HEK293T (cell line): ENCODE measurements at regions of chr6 and their contacts with region 1.

Region 1: GRCh38 chr6:125790358-125791150 is at the start of gene NCOA7:
- DNase-seq: peak; percentile 66

Region 2: DNA sequence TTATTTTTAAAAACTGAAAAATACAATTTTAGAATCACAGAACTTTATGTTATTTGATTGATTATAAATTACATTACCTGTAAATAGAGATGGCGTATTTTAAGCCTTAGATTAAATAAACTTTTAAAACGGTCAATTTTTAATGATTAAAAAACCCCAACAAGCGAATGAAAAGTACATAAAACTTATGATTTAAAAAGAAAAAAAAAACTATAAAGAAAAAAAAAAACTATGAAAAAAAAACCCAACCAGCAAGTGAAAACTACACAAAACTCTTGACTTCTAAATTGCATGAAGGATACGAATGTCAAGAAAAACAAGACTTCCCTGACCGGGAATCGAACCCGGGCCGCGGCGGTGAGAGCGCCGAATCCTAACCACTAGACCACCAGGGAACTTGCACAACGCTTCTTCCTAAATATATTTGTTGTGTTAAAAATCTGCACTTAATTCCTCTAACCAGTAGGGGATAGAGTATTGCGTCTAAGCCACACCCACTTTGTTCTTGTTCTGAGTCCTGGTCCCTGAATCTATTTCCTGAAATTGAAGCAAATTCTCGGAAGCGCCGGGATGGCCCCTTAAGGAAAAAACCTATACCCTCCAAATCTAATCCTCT is 10.5 kb before region 1 on chr6:
- CTCF ChIA-PET with region 1: interaction called, 22 read pairs
- POLR2A ChIA-PET with region 1: interaction called, 87 read pairs
- DNase-seq: peak; percentile 92

Region 3: GRCh38 chr6:125810445-125810844 is 19.9 kb after region 1 on chr6:
- CTCF ChIA-PET with region 1: interaction called, 8 read pairs
- POLR2A ChIA-PET with region 1: interaction called, 17 read pairs
- DNase-seq: peak; percentile 37

Region 4: DNA sequence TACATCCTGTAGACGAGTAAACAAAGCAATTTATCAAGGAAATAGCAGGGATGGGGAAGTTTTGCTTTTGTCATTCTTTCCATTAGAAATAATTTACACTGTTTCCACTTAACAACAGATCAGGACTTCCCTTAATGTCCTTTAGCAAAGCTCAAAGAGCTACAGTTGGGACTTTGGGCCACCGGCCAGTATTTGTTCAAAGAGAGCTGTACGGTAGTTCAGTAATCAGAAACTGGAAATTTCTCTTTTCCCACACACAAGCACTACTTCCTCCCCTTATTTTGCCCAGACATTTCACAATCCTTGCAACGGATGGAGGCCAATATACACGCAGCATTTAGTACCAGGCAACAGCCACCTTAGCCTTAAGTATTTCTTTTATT is 153.9 kb after region 1 on chr6:
- CTCF ChIA-PET with region 1: interaction called, 3 read pairs
- POLR2A ChIA-PET with region 1: interaction called, 31 read pairs
- DNase-seq: no peak

Region 5: GRCh38 chr6:125974214-125974866 is 183.8 kb after region 1 on chr6:
- CTCF ChIA-PET with region 1: interaction called, 10 read pairs
- POLR2A ChIA-PET with region 1: interaction called, 8 read pairs
- DNase-seq: peak; percentile 35

Region 6: GRCh38 chr6:125986300-125987025 is 195.9 kb after region 1 on chr6 and contains the start of gene TRMT11:
- CTCF ChIA-PET with region 1: interaction called, 5 read pairs
- POLR2A ChIA-PET with region 1: interaction called, 30 read pairs
- DNase-seq: peak; percentile 98